Lower leg skin (tissue), 4 donors: ENCODE measurements at regions of chr3 and their contacts with region 1.

Region 1: DNA sequence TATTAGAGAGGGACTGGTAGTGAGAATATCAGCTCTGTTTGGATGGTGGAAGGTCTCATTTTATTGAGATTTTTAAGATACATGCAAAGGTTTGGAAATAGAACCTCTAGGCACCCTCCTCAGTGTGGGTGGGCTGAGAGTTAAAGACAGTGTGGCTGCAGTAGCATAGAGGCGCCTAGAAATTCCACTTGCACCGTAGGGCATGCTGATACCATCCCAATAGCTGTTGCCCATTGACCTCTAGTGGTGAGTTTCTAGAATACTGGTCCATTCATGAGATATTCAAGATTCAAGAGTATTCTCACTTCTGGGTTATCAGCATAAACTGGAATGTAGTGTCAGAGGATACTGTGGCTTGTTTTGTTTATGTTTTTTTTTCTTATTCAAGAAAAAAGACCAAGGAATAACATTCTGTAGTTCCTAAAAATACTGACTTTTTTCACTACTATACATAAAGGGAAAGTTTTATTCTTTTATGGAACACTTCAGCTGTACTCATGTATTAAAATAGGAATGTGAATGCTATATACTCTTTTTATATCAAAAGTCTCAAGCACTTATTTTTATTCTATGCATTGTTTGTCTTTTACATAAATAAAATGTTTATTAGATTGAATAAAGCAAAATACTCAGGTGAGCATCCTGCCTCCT is 87.2 kb downstream of the TGFBR2 start:
- DNase-seq: peak in 1 of 2 donors; percentile 51
- H3K4me3 ChIP-seq: no peak overlapping the region
- CTCF ChIP-seq: peak in 1 of 3 donors; percentile 45
- POLR2A ChIP-seq: no peak

Region 2: DNA sequence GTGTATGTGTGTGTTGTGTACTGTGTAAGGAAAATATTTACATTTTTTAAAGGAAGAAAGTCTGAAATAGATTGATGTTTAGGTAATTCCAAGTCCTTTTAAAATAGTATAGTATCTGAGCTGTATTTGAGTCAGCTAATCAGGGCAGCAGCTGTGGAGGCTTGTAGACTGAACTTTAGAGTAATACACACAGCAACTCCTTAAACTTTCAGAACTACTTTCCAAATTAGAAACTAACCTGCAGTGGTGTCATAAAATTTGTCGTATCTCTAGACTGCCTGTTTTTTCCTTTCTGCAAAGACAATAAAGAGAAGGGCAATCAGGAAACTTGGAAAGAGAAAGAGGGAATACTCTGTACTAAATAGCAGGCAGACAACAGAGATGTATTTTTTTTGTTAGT is 1953.9 kb before region 1 on chr3:
- intact Hi-C with region 1: no loop called
- DNase-seq: no peak
- H3K4me3 ChIP-seq: no peak overlapping the region
- CTCF ChIP-seq: no peak
- POLR2A ChIP-seq: no peak

Region 3: DNA sequence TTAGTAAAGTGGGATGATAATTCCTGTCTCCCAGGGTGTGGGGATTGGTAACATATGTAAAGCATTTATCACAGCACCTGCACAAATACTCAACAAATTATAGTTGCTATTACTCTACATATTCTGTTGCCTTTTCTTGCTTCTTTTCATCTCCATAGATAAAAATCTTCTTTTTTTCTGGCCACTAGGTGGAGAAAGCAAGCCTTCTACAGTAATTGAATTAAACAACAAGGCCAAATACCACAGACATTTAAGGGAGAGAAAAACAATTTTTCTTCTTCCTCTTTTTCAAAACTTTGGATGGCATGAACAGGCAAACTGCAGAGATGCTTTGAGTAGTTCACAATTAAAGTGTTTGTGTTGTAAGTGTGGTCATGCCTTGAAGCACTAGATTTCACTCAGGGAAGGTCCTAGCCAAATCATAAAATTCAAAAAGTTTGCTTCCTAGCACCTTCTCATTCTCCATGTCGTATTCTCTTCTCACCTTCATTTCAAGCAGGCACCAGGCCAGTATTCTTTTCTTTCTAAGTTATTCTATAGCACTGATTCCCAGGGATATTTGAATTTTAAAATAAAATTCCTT is 580.6 kb before region 1 on chr3:
- intact Hi-C with region 1: loop called (anchors 10 kb)
- DNase-seq: no peak
- H3K4me3 ChIP-seq: no peak overlapping the region
- CTCF ChIP-seq: no peak
- POLR2A ChIP-seq: no peak

Region 4: GRCh38 chr3:30453360-30454039 is 240.1 kb before region 1 on chr3:
- intact Hi-C with region 1: no loop called
- DNase-seq: peak in 1 of 2 donors; percentile 50
- H3K4me3 ChIP-seq: no peak overlapping the region
- CTCF ChIP-seq: no peak
- POLR2A ChIP-seq: no peak

Region 5: GRCh38 chr3:30810625-30811024 is 117.0 kb after region 1 on chr3:
- intact Hi-C with region 1: no loop called
- DNase-seq: no peak
- H3K4me3 ChIP-seq: no peak overlapping the region
- CTCF ChIP-seq: no peak
- POLR2A ChIP-seq: no peak